ENCODE measurements at regions of chr1 and their contacts with region 1.

Region 1: DNA sequence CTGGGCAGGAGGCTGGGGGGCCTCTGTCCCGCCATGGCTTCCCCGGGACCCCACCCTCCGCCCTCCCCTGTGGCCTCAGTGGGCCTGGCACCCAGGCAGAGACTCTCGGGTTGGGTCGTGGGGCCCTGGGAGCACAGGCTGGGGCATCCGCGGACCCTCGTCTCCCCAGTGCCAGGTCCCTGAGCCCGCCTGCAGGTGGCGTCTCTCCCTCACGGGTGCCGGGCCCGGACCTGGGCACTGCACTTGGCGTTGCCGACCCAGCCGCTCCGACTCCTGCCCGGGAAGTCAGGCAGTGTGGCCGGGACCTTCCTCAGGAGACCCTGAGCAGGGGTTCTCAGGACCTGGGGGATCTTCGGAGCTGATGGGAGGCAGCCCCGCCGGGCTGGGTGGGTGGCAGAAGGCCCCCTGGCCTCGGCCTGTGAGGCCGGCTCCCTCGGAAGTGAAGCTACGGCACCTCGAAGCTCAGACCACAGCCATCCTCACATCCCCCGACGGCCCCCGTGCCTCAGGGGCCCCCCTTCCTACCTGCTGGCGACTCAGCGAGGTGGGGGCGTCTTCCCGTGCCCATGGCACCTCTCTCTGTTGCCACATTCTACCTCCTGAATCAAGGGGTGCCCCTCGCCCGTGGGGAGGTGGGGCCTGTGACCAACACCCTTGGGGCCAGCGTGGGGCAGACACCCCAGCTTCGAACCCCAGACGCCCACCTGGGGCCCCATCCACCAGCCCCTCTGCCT is 6.4 kb upstream of the C1orf159 start:
- DNase-seq: peak; percentile 76
- H3K4me3 ChIP-seq: no peak overlapping the region
- H3K27ac ChIP-seq: no peak overlapping the region
- H3K4me1 ChIP-seq: no peaks in the 10 kb centered on the region
- H3K27me3 ChIP-seq: no peaks in the 10 kb centered on the region
- CTCF ChIP-seq: peak; percentile 78 to 98 (median 93)
- POLR2A ChIP-seq: no peak

Region 2: GRCh38 chr1:1273512-1274298 is 151.5 kb after region 1 on chr1 and contains the start of gene UBE2J2:
- intact Hi-C with region 1: no loop called
- DNase-seq: peak; percentile 91
- H3K4me3 ChIP-seq: peak within 1 kb of the TSS; percentile 91 to 99
- H3K27ac ChIP-seq: peak within 1 kb of the TSS; percentile 71 to 75
- H3K4me1 ChIP-seq: peaks cover 22% of the 10 kb centered on the region
- H3K27me3 ChIP-seq: no peaks in the 10 kb centered on the region
- CTCF ChIP-seq: peak in 1 of 4 experiments; percentile 3
- POLR2A ChIP-seq: peak; percentile 44
- total RNA-seq, gene UBE2J2: 56.0 to 79.4 TPM

Region 3: GRCh38 chr1:1291548-1292441 is 169.6 kb after region 1 on chr1:
- intact Hi-C with region 1: loop called (anchors 1 kb)
- DNase-seq: peak; percentile 86
- H3K4me3 ChIP-seq: no peak overlapping the region
- H3K27ac ChIP-seq: no peak overlapping the region
- H3K4me1 ChIP-seq: peaks cover 4% of the 10 kb centered on the region
- H3K27me3 ChIP-seq: no peaks in the 10 kb centered on the region
- CTCF ChIP-seq: peak; percentile 58 to 94 (median 78)
- POLR2A ChIP-seq: no peak

Region 4: DNA sequence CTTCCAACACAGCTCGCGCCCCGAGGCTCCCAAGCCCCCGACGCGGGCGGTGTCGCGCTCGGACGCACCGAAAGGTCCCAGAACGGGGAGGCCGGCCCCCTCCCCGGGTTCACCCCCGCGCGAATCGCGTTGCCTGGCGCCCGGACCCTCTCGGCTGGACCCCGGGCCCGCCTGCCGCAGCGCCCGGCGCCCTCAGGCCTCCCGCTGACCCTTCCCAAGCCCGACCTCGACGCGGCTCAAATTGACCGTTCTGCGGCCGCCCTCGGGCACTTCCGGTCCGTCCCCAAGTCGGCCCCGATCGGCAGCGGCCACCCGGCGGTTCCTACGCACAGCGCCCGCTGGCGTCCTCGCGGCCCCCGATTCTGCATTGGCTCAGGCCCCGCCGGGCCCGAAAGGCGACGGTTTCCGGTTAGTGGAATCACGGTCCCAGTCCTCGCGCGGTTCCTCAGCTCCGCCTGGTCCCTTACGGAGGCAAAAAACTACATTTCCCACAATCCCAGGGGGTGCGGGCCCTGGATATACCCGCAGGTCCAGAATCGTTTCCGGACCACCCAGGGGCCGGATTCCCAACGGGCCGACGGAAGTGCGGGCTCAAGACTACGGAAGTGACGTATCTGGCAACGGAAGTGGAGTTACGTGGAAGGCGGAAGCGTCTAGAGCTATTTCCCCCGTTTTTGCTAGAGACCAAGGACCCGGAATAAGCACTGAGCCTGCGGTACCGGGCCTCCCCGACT is 252.9 kb after region 1 on chr1 and contains the start of gene AURKAIP1:
- intact Hi-C with region 1: loop called (anchors 5 kb)
- DNase-seq: peak; percentile 99
- H3K4me3 ChIP-seq: peak within 1 kb of the TSS; percentile 96 to 98
- H3K27ac ChIP-seq: peak within 1 kb of the TSS; percentile 88 to 91
- H3K4me1 ChIP-seq: peaks cover 17% of the 10 kb centered on the region
- H3K27me3 ChIP-seq: no peaks in the 10 kb centered on the region
- CTCF ChIP-seq: peak in 3 of 4 experiments; percentile 23 to 62 (median 56)
- POLR2A ChIP-seq: peak; percentile 45
- total RNA-seq, gene AURKAIP1: 152 to 161 TPM